ENCODE measurements at regions of chr17 and their contacts with region 1.

Region 1: GRCh38 chr17:48555258-48556228 is 10.6 kb upstream of the HOXB2 start:
- DNase-seq: no peak
- ATAC-seq: peak; percentile 73 to 81
- H3K4me3 Mint-ChIP-seq: peak overlapping the region; percentile 82 to 97 (median 92)
- H3K27ac Mint-ChIP-seq: peak overlapping the region in 9 of 10 donors; percentile 35 to 96 (median 78)
- H3K4me1 Mint-ChIP-seq: peaks cover 6 to 20% (median 8%) of the 10 kb centered on the region in 4 donors
- H3K27me3 Mint-ChIP-seq: peaks cover 8 to 68% (median 22%) of the 10 kb centered on the region in 5 donors

Region 2: DNA sequence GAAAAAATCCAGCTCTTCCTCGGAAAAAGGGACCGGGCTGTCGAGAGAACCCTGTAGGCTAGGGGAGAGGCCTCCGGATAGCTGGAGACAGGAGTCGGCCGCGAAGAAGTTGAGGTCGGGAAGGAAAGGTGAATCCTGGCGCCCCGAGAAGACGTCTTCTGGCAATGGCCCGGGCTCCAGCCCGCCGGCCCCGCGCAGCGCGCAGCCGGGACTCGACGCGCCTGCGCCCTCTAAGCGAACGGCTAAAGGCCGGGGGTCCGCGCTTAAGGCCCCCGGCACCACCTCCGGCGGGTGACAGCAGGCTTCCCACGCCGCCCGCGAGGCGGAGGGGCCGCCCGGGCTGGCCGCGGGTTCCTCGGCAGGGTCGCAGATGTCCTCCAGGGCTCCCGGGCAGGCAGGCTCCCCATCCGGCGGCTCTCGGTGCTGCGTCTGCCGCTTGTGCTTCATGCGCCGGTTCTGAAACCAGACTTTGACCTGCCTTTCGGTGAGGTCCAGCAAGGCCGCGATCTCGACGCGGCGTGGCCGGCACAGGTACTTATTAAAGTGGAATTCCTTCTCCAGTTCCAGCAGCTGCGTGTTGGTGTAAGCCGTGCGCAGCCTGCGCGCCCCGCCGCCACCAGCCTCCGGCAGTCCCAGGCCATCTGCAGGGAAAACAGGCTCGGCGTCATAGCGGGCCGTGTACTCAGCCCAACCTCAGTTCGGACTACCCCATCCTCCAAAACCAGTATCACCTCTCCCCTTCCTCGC is 12.3 kb before region 1 on chr17:
- POLR2A ChIA-PET with region 1: interaction called, 12 read pairs
- DNase-seq: peak in 9 of 10 donors; percentile 36 to 78 (median 53)
- ATAC-seq: peak; percentile 59 to 61
- H3K4me3 Mint-ChIP-seq: peak overlapping the region; percentile 82 to 99 (median 98)
- H3K27ac Mint-ChIP-seq: peak overlapping the region; percentile 93 to 100 (median 98)
- H3K4me1 Mint-ChIP-seq: peaks cover 20 to 60% (median 48%) of the 10 kb centered on the region in 4 donors
- H3K27me3 Mint-ChIP-seq: peaks cover 6 to 41% (median 14%) of the 10 kb centered on the region in 5 donors

Measured in naive thymus-derived CD8-positive, alpha-beta T cell (primary cell).